CD8-positive, alpha-beta T cell (primary cell): ENCODE measurements at regions of chr5 and their contacts with region 1.

Region 1: GRCh38 chr5:157108976-157109375 is at the start of gene HAVCR2:
- DNase-seq: peak; percentile 24 to 74 (median 54)
- ATAC-seq: peak; percentile 94
- H3K4me3 ChIP-seq: peak within 1 kb of the TSS; percentile 26 to 39
- H3K4me3 Mint-ChIP-seq: peak within 1 kb of the TSS; percentile 84
- H3K27ac ChIP-seq: peak within 1 kb of the TSS; percentile 26 to 70
- H3K27ac Mint-ChIP-seq: peak within 1 kb of the TSS; percentile 95
- H3K4me1 ChIP-seq: peaks cover 22% of the 10 kb centered on the region
- H3K4me1 Mint-ChIP-seq: peaks cover 43% of the 10 kb centered on the region
- H3K27me3 ChIP-seq: no peaks in the 10 kb centered on the region
- H3K27me3 Mint-ChIP-seq: no peaks in the 10 kb centered on the region
- CTCF ChIP-seq: no peak
- total RNA-seq, gene HAVCR2: 1.6 to 3.8 TPM

Region 2: DNA sequence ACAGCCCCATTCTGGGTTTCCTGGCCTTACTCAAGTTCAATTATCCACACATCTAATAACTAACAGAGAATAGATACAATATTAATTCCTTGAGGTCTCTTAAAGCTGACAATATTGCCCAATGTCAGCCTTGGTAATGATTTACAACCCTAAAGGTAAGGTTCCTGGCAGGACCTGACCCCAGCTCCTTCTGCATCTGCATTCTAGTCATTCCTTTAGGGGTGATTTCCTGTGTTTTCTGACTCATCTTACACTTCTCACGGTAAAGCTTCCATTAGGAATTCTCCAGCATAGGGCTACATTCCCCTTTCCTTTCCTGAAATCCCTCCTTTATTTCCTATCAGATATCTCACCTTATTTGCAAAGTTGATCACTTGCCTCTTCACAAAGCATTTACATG is 59.4 kb before region 1 on chr5:
- CTCF ChIA-PET with region 1: no interaction called
- POLR2A ChIA-PET with region 1: no interaction called
- intact Hi-C with region 1: loop called in 1 of 2 experiments (anchors 2 kb)
- DNase-seq: no peak
- ATAC-seq: no peak
- H3K4me3 ChIP-seq: peak overlapping the region; percentile 2 to 55
- H3K4me3 Mint-ChIP-seq: peak overlapping the region; percentile 72
- H3K27ac ChIP-seq: peak overlapping the region; percentile 9 to 34
- H3K27ac Mint-ChIP-seq: peak overlapping the region; percentile 83
- H3K4me1 ChIP-seq: peaks cover 36% of the 10 kb centered on the region
- H3K4me1 Mint-ChIP-seq: peaks cover 68% of the 10 kb centered on the region
- H3K27me3 ChIP-seq: no peaks in the 10 kb centered on the region
- H3K27me3 Mint-ChIP-seq: no peaks in the 10 kb centered on the region
- CTCF ChIP-seq: no peak

Region 3: DNA sequence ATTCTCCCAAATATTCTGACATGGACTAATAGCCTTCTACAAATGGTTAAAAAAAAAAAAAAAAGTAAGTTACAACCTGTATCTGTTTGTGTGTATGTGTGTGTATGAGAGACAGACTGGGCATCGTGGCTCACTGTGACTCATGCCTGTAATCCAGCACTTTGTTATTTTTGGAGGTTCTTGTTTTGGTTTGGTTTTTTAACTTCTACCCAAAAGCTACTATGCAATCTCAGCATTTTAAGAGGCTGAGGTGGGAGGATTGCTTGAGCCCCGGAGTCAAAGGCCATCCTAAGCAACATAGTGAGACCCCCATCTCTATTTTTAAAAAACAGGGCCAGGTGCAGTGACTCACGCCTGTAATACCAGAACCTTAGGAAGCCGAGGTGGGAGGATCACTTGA is 32.4 kb before region 1 on chr5:
- CTCF ChIA-PET with region 1: no interaction called
- POLR2A ChIA-PET with region 1: no interaction called
- intact Hi-C with region 1: no loop called
- DNase-seq: no peak
- ATAC-seq: no peak
- H3K4me3 ChIP-seq: no peak overlapping the region
- H3K4me3 Mint-ChIP-seq: no peak overlapping the region
- H3K27ac ChIP-seq: no peak overlapping the region
- H3K27ac Mint-ChIP-seq: no peak overlapping the region
- H3K4me1 ChIP-seq: no peaks in the 10 kb centered on the region
- H3K4me1 Mint-ChIP-seq: peaks cover 2% of the 10 kb centered on the region
- H3K27me3 ChIP-seq: no peaks in the 10 kb centered on the region
- H3K27me3 Mint-ChIP-seq: no peaks in the 10 kb centered on the region
- CTCF ChIP-seq: no peak

Region 4: GRCh38 chr5:157271740-157272271 is 162.8 kb after region 1 on chr5:
- CTCF ChIA-PET with region 1: no interaction called
- POLR2A ChIA-PET with region 1: no interaction called
- intact Hi-C with region 1: no loop called
- DNase-seq: peak; percentile 73 to 98 (median 88)
- ATAC-seq: peak; percentile 87
- H3K4me3 ChIP-seq: peak overlapping the region in 1 of 2 experiments; percentile 31
- H3K4me3 Mint-ChIP-seq: peak overlapping the region; percentile 56
- H3K27ac ChIP-seq: peak overlapping the region; percentile 79 to 82
- H3K27ac Mint-ChIP-seq: peak overlapping the region; percentile 98
- H3K4me1 ChIP-seq: peaks cover 89% of the 10 kb centered on the region
- H3K4me1 Mint-ChIP-seq: peaks cover 89% of the 10 kb centered on the region
- H3K27me3 ChIP-seq: no peaks in the 10 kb centered on the region
- H3K27me3 Mint-ChIP-seq: no peaks in the 10 kb centered on the region
- CTCF ChIP-seq: no peak

Region 5: GRCh38 chr5:158051036-158051435 is 942.1 kb after region 1 on chr5:
- CTCF ChIA-PET with region 1: no interaction called
- POLR2A ChIA-PET with region 1: no interaction called
- intact Hi-C with region 1: no loop called
- DNase-seq: no peak
- ATAC-seq: no peak
- H3K4me3 ChIP-seq: no peak overlapping the region
- H3K4me3 Mint-ChIP-seq: no peak overlapping the region
- H3K27ac ChIP-seq: no peak overlapping the region
- H3K27ac Mint-ChIP-seq: no peak overlapping the region
- H3K4me1 ChIP-seq: no peaks in the 10 kb centered on the region
- H3K4me1 Mint-ChIP-seq: no peaks in the 10 kb centered on the region
- H3K27me3 ChIP-seq: peaks cover 0 to 4% of the 10 kb centered on the region in 2 experiments
- H3K27me3 Mint-ChIP-seq: peaks cover 11% of the 10 kb centered on the region
- CTCF ChIP-seq: no peak